Caco-2 (cell line): ENCODE measurements at regions of chr6 and their contacts with region 1.

Region 1: GRCh38 chr6:5214570-5215052 is 46.1 kb downstream of the LYRM4 start:
- DNase-seq: peak in 1 of 2 experiments; percentile 68
- H3K4me3 ChIP-seq: no peak overlapping the region
- H3K4me3 Mint-ChIP-seq: no peak overlapping the region
- H3K27ac Mint-ChIP-seq: no peak overlapping the region
- H3K4me1 ChIP-seq: no peaks in the 10 kb centered on the region
- H3K4me1 Mint-ChIP-seq: no peaks in the 10 kb centered on the region
- H3K27me3 ChIP-seq: no peaks in the 10 kb centered on the region
- H3K27me3 Mint-ChIP-seq: no peaks in the 10 kb centered on the region
- CTCF ChIP-seq: peak; percentile 57 to 60

Region 2: DNA sequence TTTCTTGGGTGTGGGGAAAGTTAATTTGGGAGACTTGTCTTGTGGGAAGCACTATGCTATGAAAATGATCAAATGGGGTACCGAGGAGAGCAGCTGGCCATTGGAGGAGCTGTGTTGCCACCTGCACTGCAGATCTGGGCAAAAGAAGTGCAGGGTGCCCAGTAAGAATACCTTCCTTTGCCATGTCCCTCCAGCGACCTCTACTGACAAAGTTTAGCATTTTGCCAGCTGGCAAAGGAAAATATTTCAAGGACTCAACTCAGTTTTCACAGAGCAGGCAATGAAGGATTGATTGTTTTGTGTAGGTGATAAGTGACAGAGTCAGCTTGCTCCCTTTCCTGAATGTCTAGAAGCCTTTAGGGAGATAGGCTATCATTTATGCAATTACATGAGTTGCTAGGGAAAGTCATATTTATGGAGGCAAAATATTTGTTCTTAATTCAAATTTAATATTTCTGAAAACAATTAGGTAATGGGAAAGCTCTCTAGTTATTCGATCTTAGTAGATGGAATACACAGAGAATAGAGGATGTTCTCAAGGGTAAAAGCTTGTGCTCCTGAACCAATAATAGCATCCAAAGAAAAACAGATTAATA is 165.1 kb after region 1 on chr6:
- CTCF ChIA-PET with region 1: no interaction called
- POLR2A ChIA-PET with region 1: no interaction called
- intact Hi-C with region 1: loop called (anchors 1 kb)
- DNase-seq: peak in 1 of 2 experiments; percentile 58
- H3K4me3 ChIP-seq: no peak overlapping the region
- H3K4me3 Mint-ChIP-seq: no peak overlapping the region
- H3K27ac Mint-ChIP-seq: no peak overlapping the region
- H3K4me1 ChIP-seq: no peaks in the 10 kb centered on the region
- H3K4me1 Mint-ChIP-seq: peaks cover 7% of the 10 kb centered on the region
- H3K27me3 ChIP-seq: no peaks in the 10 kb centered on the region
- H3K27me3 Mint-ChIP-seq: no peaks in the 10 kb centered on the region
- CTCF ChIP-seq: peak; percentile 63 to 65